Activated B cell treated with CpG ODN at 0.5 μM for 24 hours (primary cell): ENCODE measurements at regions of chr21 and their contacts with region 1.

Region 1: GRCh38 chr21:14602382-14602958 is 56.4 kb upstream of the SAMSN1 start:
- DNase-seq: no peak
- ATAC-seq: peak; percentile 49
- H3K4me3 Mint-ChIP-seq: no peak overlapping the region
- H3K27ac Mint-ChIP-seq: peak overlapping the region; percentile 4
- H3K4me1 Mint-ChIP-seq: peaks cover 12% of the 10 kb centered on the region
- H3K27me3 Mint-ChIP-seq: no peaks in the 10 kb centered on the region
- CTCF ChIP-seq: no peak

Region 2: DNA sequence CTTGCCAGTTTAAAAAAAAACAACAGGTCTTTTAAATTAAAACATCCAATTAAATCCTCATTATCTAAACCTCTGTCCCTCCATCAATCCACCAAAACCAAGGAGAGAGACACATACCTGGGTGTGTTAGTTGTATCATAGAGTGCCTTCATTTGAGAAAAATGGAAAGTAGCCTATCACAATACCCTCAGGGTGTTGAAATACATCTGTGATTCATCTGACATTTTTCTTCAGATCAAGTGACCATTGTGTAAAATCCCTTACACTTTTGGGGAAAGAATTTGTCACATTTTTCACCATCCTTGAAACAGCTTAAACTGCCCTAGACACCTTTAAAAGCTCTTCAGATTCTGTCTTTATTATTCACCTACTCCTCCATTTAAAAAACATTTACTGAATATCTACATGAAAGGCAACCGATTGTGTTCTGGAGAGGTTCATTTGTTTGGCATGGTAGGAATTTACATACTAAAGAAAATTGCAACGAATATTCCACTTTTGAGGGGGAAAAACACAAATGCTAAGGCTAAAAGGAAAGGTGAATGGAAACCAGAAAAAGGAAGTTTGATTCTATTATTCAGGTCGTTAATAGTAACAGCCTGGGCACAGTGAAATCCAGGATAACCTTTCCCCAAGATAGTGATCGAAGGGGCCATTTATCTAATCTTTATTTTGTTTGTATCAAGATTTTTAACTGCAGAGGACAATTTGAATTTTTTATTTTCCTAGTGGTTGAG is 14.0 kb after region 1 on chr21:
- CTCF ChIA-PET with region 1: no interaction called
- POLR2A ChIA-PET with region 1: no interaction called
- intact Hi-C with region 1: loop called (anchors 2 kb)
- DNase-seq: no peak
- ATAC-seq: peak; percentile 25
- H3K4me3 Mint-ChIP-seq: peak overlapping the region; percentile 49
- H3K27ac Mint-ChIP-seq: peak overlapping the region; percentile 78
- H3K4me1 Mint-ChIP-seq: peaks cover 37% of the 10 kb centered on the region
- H3K27me3 Mint-ChIP-seq: no peaks in the 10 kb centered on the region
- CTCF ChIP-seq: no peak

Region 3: DNA sequence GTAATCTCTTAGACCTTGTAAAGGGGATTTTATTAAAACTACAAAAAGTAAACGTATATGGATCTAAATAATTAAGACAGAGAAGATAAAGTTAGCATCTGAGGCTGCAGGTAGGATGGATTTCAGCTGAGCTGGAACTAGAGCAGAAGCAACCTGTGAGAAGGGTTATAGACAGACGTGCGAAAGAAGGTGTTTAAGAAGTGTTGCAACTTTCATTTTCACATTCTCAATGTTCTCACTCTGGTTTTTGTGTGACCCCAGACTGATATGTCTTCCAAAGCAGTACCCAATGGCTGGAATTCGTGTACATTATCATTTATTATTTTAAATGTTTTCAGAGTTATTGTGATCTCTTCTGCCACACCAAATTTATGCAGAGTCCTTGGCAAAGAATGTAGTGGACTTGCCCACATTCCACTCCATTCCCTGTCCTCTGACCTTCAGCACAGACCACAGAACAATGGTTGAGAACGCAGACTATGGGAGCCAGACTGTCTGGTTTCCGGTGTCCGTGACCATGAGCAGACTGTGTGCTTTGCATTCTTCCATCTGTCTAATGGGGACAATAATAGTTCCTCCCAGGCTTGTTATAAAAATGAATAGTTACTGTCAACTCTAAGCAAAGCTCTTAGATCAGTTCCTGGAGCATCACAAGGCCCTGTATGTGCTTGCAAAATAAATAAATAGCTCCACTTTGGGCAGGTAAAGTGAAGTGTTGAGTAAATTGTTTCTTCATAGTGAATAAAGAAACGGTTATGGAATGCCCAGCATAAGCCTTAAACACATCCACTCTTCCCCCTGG is 84.2 kb after region 1 on chr21:
- CTCF ChIA-PET with region 1: no interaction called
- POLR2A ChIA-PET with region 1: no interaction called
- intact Hi-C with region 1: no loop called
- DNase-seq: no peak
- ATAC-seq: peak; percentile 35
- H3K4me3 Mint-ChIP-seq: peak overlapping the region; percentile 30
- H3K27ac Mint-ChIP-seq: peak overlapping the region; percentile 82
- H3K4me1 Mint-ChIP-seq: peaks cover 73% of the 10 kb centered on the region
- H3K27me3 Mint-ChIP-seq: no peaks in the 10 kb centered on the region
- CTCF ChIP-seq: no peak